Activated B cell treated with CpG ODN at 0.5 μM for 24 hours (primary cell): ENCODE measurements at regions of chr6 and their contacts with region 1.

Region 1: DNA sequence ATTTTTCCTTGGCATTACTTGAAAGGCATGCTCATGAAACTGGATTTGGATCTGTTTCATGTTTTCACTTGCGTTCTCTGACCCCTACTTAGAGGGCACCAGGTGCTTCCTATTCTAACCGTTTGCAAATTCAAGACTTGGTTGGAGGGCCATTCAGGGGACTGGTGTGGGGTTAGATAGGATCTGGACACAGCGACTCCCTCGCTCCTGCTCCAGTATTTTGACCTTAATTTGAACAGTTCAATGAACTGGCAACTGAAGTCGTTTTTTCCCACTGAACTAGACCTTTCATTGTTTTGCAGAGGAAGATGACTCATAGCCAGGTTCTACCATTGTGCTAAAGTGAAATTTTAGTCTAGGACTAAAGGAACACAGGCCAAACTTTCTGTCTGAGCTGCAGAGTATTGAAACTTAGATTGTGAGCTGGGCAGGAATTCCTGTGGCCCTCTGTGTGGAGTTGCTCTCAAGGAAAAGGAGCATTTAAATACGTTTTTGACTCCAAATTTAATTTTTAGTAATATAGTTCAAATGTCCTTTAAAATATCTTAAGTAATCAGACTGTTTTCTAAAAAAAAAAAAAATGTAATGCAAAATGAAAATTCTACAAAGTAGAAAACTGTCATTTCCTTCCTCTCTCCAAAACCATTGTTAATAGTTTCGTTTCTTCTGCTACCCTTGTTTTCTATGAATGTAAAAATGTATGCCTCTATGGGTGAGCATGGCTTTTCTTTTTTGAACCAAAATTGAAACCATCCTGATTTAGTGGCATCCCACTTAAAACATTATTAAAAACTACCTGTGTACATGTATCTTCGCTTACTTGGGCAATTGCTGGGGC is 64.8 kb downstream of the UTRN start:
- DNase-seq: no peak
- ATAC-seq: peak; percentile 38
- H3K4me3 Mint-ChIP-seq: peak overlapping the region; percentile 75
- H3K27ac Mint-ChIP-seq: peak overlapping the region; percentile 90
- H3K4me1 Mint-ChIP-seq: peaks cover 96% of the 10 kb centered on the region
- H3K27me3 Mint-ChIP-seq: no peaks in the 10 kb centered on the region
- CTCF ChIP-seq: no peak

Region 2: DNA sequence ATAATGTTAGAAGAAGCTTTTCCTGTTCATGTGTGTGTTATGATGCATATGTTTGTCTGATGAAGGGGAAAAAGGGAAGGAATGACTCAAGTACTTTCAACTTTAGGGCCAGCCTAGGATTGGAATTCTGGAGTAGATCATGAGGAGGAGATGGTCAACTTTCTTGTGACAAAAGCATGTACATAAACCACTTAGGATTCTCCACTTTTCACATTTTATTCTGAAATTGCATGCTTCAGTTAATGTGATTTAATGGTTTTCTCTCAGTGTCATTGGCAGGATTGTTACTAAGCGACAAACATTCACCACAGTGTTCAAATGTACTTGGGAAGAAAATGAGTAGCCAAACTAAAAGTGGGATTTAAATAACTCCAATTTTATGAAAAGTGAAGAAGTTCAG is 15.4 kb after region 1 on chr6:
- CTCF ChIA-PET with region 1: interaction called, 3 read pairs
- POLR2A ChIA-PET with region 1: interaction called, 3 read pairs
- intact Hi-C with region 1: loop called (anchors 1 kb)
- DNase-seq: no peak
- ATAC-seq: no peak
- H3K4me3 Mint-ChIP-seq: no peak overlapping the region
- H3K27ac Mint-ChIP-seq: peak overlapping the region; percentile 47
- H3K4me1 Mint-ChIP-seq: peaks cover 62% of the 10 kb centered on the region
- H3K27me3 Mint-ChIP-seq: no peaks in the 10 kb centered on the region
- CTCF ChIP-seq: no peak

Region 3: GRCh38 chr6:144377586-144378210 is 27.8 kb after region 1 on chr6:
- CTCF ChIA-PET with region 1: no interaction called
- POLR2A ChIA-PET with region 1: interaction called, 14 read pairs
- intact Hi-C with region 1: loop called (anchors 2 kb)
- DNase-seq: no peak
- ATAC-seq: no peak
- H3K4me3 Mint-ChIP-seq: no peak overlapping the region
- H3K27ac Mint-ChIP-seq: no peak overlapping the region
- H3K4me1 Mint-ChIP-seq: peaks cover 44% of the 10 kb centered on the region
- H3K27me3 Mint-ChIP-seq: no peaks in the 10 kb centered on the region
- CTCF ChIP-seq: no peak

Region 4: DNA sequence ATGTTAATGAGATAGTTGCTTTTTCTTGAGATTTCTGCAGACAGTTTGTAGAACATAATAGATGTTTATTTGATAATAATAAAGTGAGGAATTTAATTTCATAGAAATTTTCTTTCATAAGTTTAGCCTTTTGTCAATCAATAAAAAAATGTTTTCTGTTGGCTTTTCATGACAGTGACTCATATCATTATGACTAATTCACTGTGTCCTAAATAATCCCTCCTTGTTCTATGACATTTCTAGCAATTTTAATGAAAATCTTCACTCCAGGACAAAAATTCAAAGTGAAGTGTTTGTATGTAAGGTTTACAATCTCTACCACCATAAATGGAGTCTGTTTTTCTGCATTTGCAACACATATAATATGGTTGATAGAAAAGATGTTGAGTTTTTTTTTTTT is 45.1 kb after region 1 on chr6:
- CTCF ChIA-PET with region 1: no interaction called
- POLR2A ChIA-PET with region 1: interaction called, 4 read pairs
- intact Hi-C with region 1: loop called (anchors 2 kb)
- DNase-seq: no peak
- ATAC-seq: no peak
- H3K4me3 Mint-ChIP-seq: no peak overlapping the region
- H3K27ac Mint-ChIP-seq: no peak overlapping the region
- H3K4me1 Mint-ChIP-seq: peaks cover 36% of the 10 kb centered on the region
- H3K27me3 Mint-ChIP-seq: no peaks in the 10 kb centered on the region
- CTCF ChIP-seq: no peak

Region 5: DNA sequence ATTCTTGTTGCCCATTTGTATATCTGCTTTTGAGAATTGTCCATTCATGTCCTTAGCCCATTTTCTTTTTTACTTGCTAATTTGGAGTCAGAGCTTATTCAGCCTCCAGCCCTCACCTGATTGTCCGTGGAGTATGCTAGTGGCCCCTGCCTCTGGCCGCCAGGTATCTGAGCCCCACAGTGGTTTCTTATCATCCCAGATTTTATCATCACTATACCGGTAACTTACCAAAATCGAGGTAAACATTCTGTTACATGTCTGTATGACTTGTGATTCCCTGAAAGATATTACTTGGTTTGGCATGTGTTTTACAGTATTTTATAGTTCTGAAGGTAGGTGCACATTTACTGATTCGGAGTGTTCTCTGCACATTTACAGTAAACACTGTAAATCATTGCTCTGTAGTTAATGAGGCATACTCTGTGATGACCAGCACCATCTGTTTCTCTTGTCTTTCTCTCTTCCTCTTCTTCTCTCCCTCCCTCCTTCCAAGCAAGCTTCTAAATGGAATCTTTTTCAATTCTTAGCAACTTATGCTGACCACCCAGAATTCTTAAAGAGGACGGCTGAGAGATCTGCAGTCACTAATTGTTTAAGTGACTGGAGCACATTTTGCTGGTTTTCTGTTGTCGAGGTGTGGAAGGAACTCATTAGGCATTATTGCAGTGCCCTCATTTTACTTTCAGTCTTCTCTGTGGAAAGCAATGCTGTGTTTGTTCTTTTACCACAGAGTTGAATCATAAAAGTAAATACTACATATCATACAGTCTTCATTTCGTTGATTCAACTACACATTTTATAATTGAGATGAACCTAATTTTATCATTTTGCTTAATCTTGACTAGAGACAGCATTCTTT is 61.7 kb after region 1 on chr6:
- CTCF ChIA-PET with region 1: no interaction called
- POLR2A ChIA-PET with region 1: no interaction called
- intact Hi-C with region 1: no loop called
- DNase-seq: no peak
- ATAC-seq: no peak
- H3K4me3 Mint-ChIP-seq: no peak overlapping the region
- H3K27ac Mint-ChIP-seq: no peak overlapping the region
- H3K4me1 Mint-ChIP-seq: peaks cover 43% of the 10 kb centered on the region
- H3K27me3 Mint-ChIP-seq: no peaks in the 10 kb centered on the region
- CTCF ChIP-seq: no peak

Region 6: GRCh38 chr6:144595266-144595665 is 245.4 kb after region 1 on chr6:
- CTCF ChIA-PET with region 1: no interaction called
- POLR2A ChIA-PET with region 1: no interaction called
- intact Hi-C with region 1: no loop called
- DNase-seq: no peak
- ATAC-seq: no peak
- H3K4me3 Mint-ChIP-seq: no peak overlapping the region
- H3K27ac Mint-ChIP-seq: no peak overlapping the region
- H3K4me1 Mint-ChIP-seq: peaks cover 2% of the 10 kb centered on the region
- H3K27me3 Mint-ChIP-seq: no peaks in the 10 kb centered on the region
- CTCF ChIP-seq: no peak

Region 7: DNA sequence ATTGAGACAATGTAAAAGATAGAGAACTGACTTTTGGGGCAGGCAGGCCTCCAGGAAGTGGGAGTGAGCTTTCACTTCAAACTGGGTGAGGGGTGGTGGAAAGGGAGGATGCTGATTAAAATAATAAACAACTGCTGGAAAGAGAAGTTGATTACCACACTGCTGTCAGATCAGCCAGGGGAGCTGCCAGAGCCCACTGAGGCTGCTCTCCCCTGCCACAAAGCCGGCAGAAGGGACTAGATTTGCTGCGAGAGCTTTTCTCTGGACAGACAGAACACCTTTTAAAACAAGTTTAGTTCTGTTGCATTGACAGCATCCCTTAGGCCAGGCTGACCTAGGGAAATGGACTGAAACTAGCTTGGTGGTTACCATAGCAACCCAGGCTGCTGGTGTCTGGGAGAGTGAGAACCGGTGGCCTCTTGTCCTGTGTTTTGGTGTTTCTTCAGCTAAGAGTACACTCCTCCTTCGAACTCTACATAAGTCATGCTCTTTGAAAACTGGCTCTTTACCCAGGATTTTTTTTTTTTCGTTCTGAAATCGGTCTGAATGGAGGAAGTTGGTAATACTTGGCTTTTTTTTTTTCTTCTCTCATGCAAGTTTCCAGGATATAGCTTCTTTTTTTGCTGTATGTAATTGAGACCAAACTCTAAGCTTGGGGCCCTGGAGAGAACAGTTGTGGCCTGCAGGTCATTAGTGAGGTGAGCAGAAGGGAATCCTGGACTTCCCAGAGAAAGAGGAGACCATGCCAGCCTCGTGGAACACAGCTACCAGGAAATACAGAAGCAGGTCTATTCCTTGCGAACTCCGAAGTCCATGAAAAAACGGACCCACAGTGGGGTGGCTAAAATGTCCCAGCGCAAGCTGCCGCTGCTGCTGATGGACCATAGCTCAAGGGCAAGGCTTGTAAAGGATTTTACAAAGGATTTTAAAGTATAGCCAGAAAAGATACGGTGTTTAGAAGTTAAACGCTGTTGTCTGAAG is 309.6 kb after region 1 on chr6:
- CTCF ChIA-PET with region 1: no interaction called
- POLR2A ChIA-PET with region 1: no interaction called
- intact Hi-C with region 1: loop called (anchors 10 kb)
- DNase-seq: no peak
- ATAC-seq: peak; percentile 53
- H3K4me3 Mint-ChIP-seq: peak overlapping the region; percentile 62
- H3K27ac Mint-ChIP-seq: peak overlapping the region; percentile 84
- H3K4me1 Mint-ChIP-seq: peaks cover 75% of the 10 kb centered on the region
- H3K27me3 Mint-ChIP-seq: no peaks in the 10 kb centered on the region
- CTCF ChIP-seq: no peak